Esophagus muscularis mucosa (tissue), 4 donors: ENCODE measurements at regions of chr1 and their contacts with region 1.

Region 1: DNA sequence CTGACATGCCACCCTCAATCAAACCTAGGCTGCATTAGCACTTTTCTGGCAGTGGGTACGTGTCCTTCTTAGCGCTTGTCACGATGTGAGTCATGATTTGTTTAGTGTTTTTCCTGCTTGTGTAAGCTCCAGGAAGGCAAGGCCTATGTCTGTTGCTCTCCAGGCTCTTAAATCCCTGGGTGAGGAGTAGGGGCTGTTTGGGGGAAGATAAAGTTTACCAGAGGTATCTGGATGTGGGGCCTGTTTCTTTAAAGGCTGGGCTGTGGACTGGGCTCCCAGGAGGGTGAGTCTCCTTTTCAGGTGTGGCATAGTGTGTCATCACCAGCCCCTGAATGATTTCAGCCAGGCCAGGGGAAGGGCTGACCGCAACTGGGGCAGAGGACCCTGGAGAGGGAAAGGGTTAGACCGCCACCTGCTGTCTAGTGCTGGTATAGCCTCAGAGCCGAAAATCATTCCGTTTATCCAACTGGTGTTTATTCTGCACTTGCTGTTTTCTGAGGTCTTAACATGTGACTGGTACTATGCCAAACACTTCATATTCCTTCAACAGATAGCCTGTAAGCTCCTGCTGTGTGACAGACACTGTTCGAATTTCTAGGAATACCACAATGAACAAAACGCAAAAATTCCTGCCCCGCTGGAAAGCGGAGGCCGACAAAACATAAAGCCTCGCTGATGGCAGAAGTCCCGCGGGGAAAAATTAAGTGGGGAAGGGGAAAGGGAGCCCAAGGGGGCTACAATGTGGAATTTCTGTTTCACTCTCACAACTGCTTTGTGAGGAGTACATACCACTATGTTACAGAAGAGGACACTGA is 9.7 kb downstream of the SERINC2 start:
- DNase-seq: no peak
- H3K4me3 ChIP-seq: no peak overlapping the region
- H3K27ac ChIP-seq: no peak overlapping the region
- H3K4me1 ChIP-seq: peaks cover 0 to 5% (median 0%) of the 10 kb centered on the region in 4 donors
- H3K27me3 ChIP-seq: no peaks in the 10 kb centered on the region
- CTCF ChIP-seq: peak in 2 of 3 experiments; percentile 89 to 90
- EP300 ChIP-seq: no peak
- POLR2A ChIP-seq: no peak

Region 2: DNA sequence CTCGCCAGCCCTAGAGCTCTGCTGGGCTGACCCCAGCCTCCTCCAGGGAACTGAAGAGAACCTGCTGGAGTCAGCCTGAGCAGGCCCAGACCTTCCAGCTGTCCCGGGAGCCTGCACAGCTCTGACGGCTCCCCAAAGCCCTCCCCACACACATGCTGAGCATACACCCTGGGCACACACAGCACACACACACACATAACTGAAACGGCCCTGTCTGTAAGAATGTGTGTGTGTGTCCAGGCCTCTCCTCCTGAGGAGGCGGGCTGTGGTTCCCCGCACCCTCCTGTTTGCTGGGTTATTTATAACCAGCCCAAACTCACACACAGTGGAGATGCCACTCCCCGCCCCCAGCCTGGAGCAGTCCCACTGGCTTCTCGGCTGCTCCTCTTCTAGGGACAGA is 534.3 kb before region 1 on chr1:
- intact Hi-C with region 1: no loop called
- DNase-seq: no peak
- H3K4me3 ChIP-seq: peak overlapping the region in 2 of 4 donors; percentile 6 to 27
- H3K27ac ChIP-seq: peak overlapping the region; percentile 88 to 95 (median 92)
- H3K4me1 ChIP-seq: peaks cover 54 to 99% (median 90%) of the 10 kb centered on the region in 4 donors
- H3K27me3 ChIP-seq: no peaks in the 10 kb centered on the region
- CTCF ChIP-seq: no peak
- EP300 ChIP-seq: no peak
- POLR2A ChIP-seq: no peak

Region 3: GRCh38 chr1:31155216-31155841 is 267.4 kb before region 1 on chr1:
- intact Hi-C with region 1: loop called (anchors 5 kb)
- DNase-seq: no peak
- H3K4me3 ChIP-seq: peak overlapping the region; percentile 83 to 89 (median 86)
- H3K27ac ChIP-seq: peak overlapping the region; percentile 80 to 87 (median 83)
- H3K4me1 ChIP-seq: peaks cover 6 to 15% (median 12%) of the 10 kb centered on the region in 4 donors
- H3K27me3 ChIP-seq: no peaks in the 10 kb centered on the region
- CTCF ChIP-seq: peak; percentile 26 to 36 (median 31)
- EP300 ChIP-seq: no peak
- POLR2A ChIP-seq: no peak

Region 4: GRCh38 chr1:31183873-31184554 is 238.7 kb before region 1 on chr1:
- intact Hi-C with region 1: loop called (anchors 2 kb)
- DNase-seq: no peak
- H3K4me3 ChIP-seq: no peak overlapping the region
- H3K27ac ChIP-seq: no peak overlapping the region
- H3K4me1 ChIP-seq: peaks cover 11 to 19% (median 16%) of the 10 kb centered on the region in 4 donors
- H3K27me3 ChIP-seq: peaks cover 0 to 71% (median 8%) of the 10 kb centered on the region in 4 donors
- CTCF ChIP-seq: peak; percentile 65 to 76 (median 66)
- EP300 ChIP-seq: no peak
- POLR2A ChIP-seq: no peak

Region 5: DNA sequence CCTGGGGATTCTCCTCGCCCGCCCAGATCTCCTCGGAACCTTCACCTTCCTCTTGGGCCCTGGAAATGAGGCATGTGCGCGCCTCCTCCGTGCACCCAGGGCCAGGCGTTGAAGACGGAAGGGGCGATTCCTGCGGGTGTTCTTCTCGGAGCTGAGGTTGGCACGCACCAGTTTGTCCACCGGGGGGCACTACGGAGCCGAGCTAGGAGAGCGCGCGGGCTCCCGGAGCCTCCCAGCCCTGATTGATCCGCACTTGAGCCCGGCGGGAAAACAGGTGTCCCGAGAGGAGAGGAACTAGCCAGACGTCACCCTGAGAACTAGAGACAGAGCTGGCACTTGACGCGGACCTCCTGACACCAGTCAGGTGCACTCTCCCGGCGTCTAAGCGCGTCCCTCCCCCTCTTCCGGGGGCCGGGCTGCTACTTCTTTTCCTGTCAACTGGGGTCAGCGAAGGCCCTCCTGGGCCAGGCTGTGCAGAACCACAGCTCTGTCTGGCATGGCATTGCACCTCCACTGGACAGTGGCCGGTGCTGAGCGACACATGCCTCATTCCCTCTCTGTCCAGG is 28.0 kb before region 1 on chr1:
- intact Hi-C with region 1: loop called (anchors 2 kb)
- DNase-seq: no peak
- H3K4me3 ChIP-seq: peak overlapping the region; percentile 40 to 58 (median 46)
- H3K27ac ChIP-seq: no peak overlapping the region
- H3K4me1 ChIP-seq: peaks cover 8 to 11% (median 11%) of the 10 kb centered on the region in 4 donors
- H3K27me3 ChIP-seq: no peaks in the 10 kb centered on the region
- CTCF ChIP-seq: peak; percentile 81 to 87 (median 82)
- EP300 ChIP-seq: no peak
- POLR2A ChIP-seq: no peak